ENCODE measurements at regions of chr20 and their contacts with region 1.

Region 1: GRCh38 chr20:11204926-11205768 is 531.3 kb upstream of the JAG1 start:
- DNase-seq: peak; percentile 60 to 70
- ATAC-seq: peak; percentile 84

Region 2: GRCh38 chr20:10563935-10564492 is 641.1 kb before region 1 on chr20:
- intact Hi-C with region 1: loop called in 1 of 2 experiments (anchors 5 kb)
- DNase-seq: no peak
- ATAC-seq: no peak